ENCODE measurements at regions of chr13 and their contacts with region 1.

Region 1: GRCh38 chr13:64871742-64872141 is 2358.4 kb downstream of the PCDH9 start:
- DNase-seq: no peak
- H3K4me3 Mint-ChIP-seq: no peak overlapping the region
- H3K27ac Mint-ChIP-seq: no peak overlapping the region
- H3K4me1 Mint-ChIP-seq: no peaks in the 10 kb centered on the region
- H3K27me3 Mint-ChIP-seq: no peaks in the 10 kb centered on the region

Region 2: GRCh38 chr13:64884976-64885375 is 13.2 kb after region 1 on chr13:
- CTCF ChIA-PET with region 1: no interaction called
- intact Hi-C with region 1: no loop called
- DNase-seq: no peak
- H3K4me3 Mint-ChIP-seq: no peak overlapping the region
- H3K27ac Mint-ChIP-seq: no peak overlapping the region
- H3K4me1 Mint-ChIP-seq: no peaks in the 10 kb centered on the region
- H3K27me3 Mint-ChIP-seq: no peaks in the 10 kb centered on the region

Region 3: GRCh38 chr13:64900039-64900438 is 28.3 kb after region 1 on chr13:
- CTCF ChIA-PET with region 1: no interaction called
- intact Hi-C with region 1: loop called (anchors 1 kb)
- DNase-seq: no peak
- H3K4me3 Mint-ChIP-seq: no peak overlapping the region
- H3K27ac Mint-ChIP-seq: no peak overlapping the region
- H3K4me1 Mint-ChIP-seq: no peaks in the 10 kb centered on the region
- H3K27me3 Mint-ChIP-seq: no peaks in the 10 kb centered on the region

Region 4: GRCh38 chr13:64912141-64912540 is 40.4 kb after region 1 on chr13:
- CTCF ChIA-PET with region 1: no interaction called
- intact Hi-C with region 1: no loop called
- DNase-seq: no peak
- H3K4me3 Mint-ChIP-seq: no peak overlapping the region
- H3K27ac Mint-ChIP-seq: no peak overlapping the region
- H3K4me1 Mint-ChIP-seq: no peaks in the 10 kb centered on the region
- H3K27me3 Mint-ChIP-seq: no peaks in the 10 kb centered on the region

Region 5: GRCh38 chr13:64936879-64937278 is 65.1 kb after region 1 on chr13:
- CTCF ChIA-PET with region 1: no interaction called
- intact Hi-C with region 1: no loop called
- DNase-seq: no peak
- H3K4me3 Mint-ChIP-seq: no peak overlapping the region
- H3K27ac Mint-ChIP-seq: no peak overlapping the region
- H3K4me1 Mint-ChIP-seq: no peaks in the 10 kb centered on the region
- H3K27me3 Mint-ChIP-seq: no peaks in the 10 kb centered on the region

Region 6: DNA sequence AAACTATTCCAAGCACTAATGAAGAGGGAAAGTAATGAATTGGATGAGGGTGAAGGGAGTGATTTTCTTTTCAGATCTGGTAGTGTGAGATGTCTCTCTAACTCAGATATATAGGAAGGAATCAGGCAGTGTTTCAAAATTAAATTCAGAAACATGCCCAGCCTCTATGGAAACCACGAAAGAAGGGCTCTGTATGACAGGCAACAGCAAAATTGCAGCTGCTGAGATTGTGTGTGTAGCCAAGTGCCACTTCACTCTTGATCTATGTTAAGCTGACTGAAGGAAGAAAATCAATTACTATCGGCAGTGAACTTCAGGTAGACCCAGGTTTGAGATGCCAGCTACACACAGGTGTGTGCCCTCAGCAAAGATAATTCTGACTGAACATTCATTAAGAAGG is 1971.0 kb after region 1 on chr13:
- CTCF ChIA-PET with region 1: no interaction called
- intact Hi-C with region 1: no loop called
- DNase-seq: no peak
- H3K4me3 Mint-ChIP-seq: no peak overlapping the region
- H3K27ac Mint-ChIP-seq: no peak overlapping the region
- H3K4me1 Mint-ChIP-seq: no peaks in the 10 kb centered on the region
- H3K27me3 Mint-ChIP-seq: no peaks in the 10 kb centered on the region

Measured in activated naive CD4-positive, alpha-beta T cell treated with anti-CD3 and anti-CD28 coated beads for 36 hours (primary cell).